Mammary epithelial cell (primary cell): ENCODE measurements at regions of chr11 and their contacts with region 1.

Region 1: DNA sequence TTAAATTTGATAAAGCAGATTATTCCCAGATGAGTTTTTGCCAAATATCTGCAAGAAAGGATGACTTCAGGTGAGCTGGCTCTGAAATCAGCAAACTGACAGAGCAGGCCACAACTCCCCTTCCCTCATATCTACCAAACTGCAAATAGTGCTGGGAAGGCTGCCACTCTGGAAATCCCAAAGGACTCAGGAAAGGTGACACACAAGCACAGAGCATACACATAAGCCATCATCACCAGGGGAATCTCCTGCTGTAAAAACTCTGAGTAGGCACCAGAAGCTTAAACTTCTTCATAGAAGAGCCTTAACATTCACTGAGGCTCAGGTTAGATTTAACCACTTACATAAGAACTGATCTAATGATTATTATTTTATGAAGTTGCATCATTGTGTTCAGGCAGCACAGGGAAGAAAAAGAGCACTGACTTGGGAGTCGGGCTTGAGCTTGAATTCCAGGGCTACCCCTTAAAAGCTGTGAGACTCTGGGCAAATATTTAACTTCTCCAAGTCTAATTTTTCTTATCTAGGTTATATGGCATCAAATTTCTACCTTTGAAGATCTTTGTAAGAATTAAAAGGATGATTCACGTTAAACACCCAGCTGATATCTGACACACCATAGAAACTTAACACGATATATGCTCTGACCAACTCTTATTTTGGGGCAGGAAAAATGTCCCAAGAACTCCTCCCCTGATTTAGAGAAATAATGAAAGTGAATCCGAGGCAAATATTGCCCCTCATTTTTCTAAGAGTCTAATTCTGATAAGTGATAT is 15.0 kb downstream of the SYTL2 start:
- DNase-seq: no peak
- H3K4me3 ChIP-seq: no peak overlapping the region
- H3K27ac ChIP-seq: no peak overlapping the region
- H3K4me1 ChIP-seq: no peaks in the 10 kb centered on the region
- H3K27me3 ChIP-seq: no peaks in the 10 kb centered on the region
- CTCF ChIP-seq: no peak

Region 2: DNA sequence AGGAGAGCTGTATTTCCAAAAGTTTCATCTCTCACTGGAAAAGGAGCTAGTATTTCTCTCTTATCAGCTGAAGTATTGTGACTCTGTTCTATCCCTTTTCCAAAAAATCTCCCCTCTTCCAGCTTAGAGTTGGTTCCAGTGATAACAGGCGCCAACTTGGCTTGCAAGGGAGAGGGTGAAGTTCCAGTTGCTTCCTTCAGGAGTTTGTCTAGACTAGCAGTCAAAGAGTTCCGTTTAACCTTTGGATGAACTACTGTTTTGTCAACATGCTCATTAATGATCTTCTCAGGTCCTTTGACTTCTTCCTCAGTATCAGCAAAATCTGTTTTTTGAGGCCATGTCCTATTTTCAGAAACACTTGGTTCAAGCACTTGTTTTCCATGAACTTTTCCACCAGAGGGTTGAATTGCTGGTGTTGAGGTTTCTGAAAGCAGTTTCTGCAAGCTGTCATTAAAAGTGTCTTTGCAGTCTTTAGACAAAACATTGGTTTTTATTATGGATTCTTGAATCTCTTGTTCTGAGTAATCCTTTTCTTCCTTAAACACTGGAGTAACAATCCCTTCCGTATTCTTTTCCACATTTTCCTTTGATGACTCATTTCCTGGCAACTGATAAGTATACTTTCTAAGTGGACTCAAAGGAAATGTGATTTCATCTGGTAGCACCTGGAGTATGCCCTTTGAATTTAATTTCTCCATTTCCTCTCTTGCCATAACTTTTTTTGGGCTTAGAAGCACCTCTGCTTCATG is 70.2 kb before region 1 on chr11:
- CTCF ChIA-PET with region 1: no interaction called
- dilution Hi-C with region 1: no loop called
- in situ Hi-C with region 1: no loop called
- intact Hi-C with region 1: loop called (anchors 5 kb)
- DNase-seq: peak; percentile 82
- H3K4me3 ChIP-seq: no peak overlapping the region
- H3K27ac ChIP-seq: peak overlapping the region; percentile 31
- H3K4me1 ChIP-seq: peaks cover 21% of the 10 kb centered on the region
- H3K27me3 ChIP-seq: no peaks in the 10 kb centered on the region
- CTCF ChIP-seq: peak in 1 of 2 donors; percentile 2

Region 3: DNA sequence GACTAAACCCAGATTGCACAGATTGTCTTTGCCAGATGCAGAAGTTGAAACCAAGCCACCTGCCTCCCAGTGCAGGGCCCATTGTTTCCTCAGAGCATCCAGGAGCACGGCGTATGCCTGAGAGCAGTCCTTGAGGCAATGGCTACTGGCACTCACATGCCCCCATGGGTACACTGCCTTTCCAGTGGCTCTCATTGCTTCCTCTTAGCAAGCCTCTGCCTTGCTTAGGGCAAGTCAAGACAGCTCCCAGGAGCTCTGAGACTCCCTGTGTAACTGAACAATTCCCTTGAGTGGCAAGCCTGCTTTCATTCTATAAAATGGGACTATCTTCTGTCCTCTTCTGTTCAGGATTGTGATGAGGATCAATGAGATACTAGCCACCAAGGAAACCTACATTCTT is 11.0 kb after region 1 on chr11:
- CTCF ChIA-PET with region 1: interaction called, 11 read pairs
- dilution Hi-C with region 1: no loop called
- in situ Hi-C with region 1: no loop called
- intact Hi-C with region 1: no loop called
- DNase-seq: peak; percentile 76
- H3K4me3 ChIP-seq: no peak overlapping the region
- H3K27ac ChIP-seq: peak overlapping the region; percentile 25
- H3K4me1 ChIP-seq: peaks cover 40% of the 10 kb centered on the region
- H3K27me3 ChIP-seq: no peaks in the 10 kb centered on the region
- CTCF ChIP-seq: no peak

Region 4: DNA sequence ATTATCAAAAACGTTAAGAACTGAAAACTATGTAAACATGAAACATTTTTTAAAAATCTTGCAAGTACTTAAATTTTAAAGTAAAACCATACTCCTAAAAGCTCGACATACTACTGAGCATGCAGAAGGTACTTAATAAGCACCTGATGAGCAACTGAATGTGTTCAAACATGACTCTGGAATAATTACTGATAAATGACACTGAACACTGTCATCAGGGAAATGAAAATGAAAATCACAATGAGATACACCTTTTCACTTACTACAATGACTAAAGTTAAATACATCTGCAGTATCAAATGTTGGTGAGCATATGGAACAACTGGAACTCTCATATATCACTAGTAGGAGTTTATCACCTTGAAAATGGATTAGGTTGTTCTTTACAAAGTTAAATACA is 207.8 kb after region 1 on chr11:
- CTCF ChIA-PET with region 1: no interaction called
- dilution Hi-C with region 1: no loop called
- in situ Hi-C with region 1: no loop called
- intact Hi-C with region 1: no loop called
- DNase-seq: peak; percentile 15
- H3K4me3 ChIP-seq: no peak overlapping the region
- H3K27ac ChIP-seq: no peak overlapping the region
- H3K4me1 ChIP-seq: no peaks in the 10 kb centered on the region
- H3K27me3 ChIP-seq: no peaks in the 10 kb centered on the region
- CTCF ChIP-seq: no peak